CD4-positive, alpha-beta T cell (primary cell): ENCODE measurements at regions of chr12 and their contacts with region 1.

Region 1: DNA sequence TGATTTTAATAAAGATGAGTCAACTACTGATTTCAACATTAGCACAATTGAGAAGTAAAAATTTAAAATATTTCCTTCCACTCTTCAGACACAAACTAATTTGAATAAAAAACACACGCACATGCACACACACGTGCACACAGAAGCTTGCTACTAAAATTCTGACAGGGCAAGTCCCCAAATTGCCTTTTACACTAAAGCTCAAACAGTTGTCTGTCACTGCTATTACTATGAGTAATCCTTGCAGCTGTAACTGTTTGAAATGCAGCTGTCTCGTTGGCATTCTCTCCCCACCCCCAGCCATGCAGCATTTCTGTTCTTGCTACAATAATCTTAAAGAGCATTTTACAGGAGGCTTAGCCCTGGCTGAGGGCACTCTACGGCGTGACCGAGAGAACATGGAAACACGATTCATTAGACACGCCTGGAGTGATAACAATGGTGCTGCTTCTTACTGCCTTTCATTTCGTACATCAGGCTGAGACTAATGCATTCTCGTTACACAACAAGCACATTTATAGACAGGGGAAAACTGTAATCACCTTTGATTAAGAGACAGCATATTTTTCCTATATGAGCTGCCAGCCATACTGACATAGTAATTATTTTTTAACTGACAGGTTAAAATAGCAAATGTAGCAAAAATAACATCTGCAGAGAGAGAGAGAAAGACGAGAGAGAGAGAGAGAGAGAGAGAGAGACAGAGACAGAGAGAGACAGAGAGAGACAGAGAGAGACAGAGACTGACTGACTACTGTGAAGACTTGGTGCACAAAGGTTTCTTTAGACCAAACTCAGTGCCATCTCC is 153.8 kb downstream of the MED13L start:
- DNase-seq: peak in 6 of 14 experiments; percentile 6 to 65 (median 39)
- ATAC-seq: peak; percentile 66
- H3K4me3 ChIP-seq: no peak overlapping the region
- H3K4me3 Mint-ChIP-seq: peak overlapping the region; percentile 13
- H3K27ac ChIP-seq: no peak overlapping the region
- H3K27ac Mint-ChIP-seq: peak overlapping the region; percentile 22
- H3K4me1 ChIP-seq: peaks cover 19% of the 10 kb centered on the region
- H3K4me1 Mint-ChIP-seq: peaks cover 92% of the 10 kb centered on the region
- H3K27me3 ChIP-seq: no peaks in the 10 kb centered on the region
- H3K27me3 Mint-ChIP-seq: no peaks in the 10 kb centered on the region
- CTCF ChIP-seq: no peak

Region 2: GRCh38 chr12:116266168-116266601 is 142.5 kb after region 1 on chr12:
- CTCF ChIA-PET with region 1: no interaction called
- POLR2A ChIA-PET with region 1: no interaction called
- intact Hi-C with region 1: loop called in 1 of 2 experiments (anchors 5 kb)
- DNase-seq: no peak
- ATAC-seq: no peak
- H3K4me3 ChIP-seq: no peak overlapping the region
- H3K4me3 Mint-ChIP-seq: no peak overlapping the region
- H3K27ac ChIP-seq: no peak overlapping the region
- H3K27ac Mint-ChIP-seq: no peak overlapping the region
- H3K4me1 ChIP-seq: peaks cover 22% of the 10 kb centered on the region
- H3K4me1 Mint-ChIP-seq: peaks cover 16% of the 10 kb centered on the region
- H3K27me3 ChIP-seq: no peaks in the 10 kb centered on the region
- H3K27me3 Mint-ChIP-seq: no peaks in the 10 kb centered on the region
- CTCF ChIP-seq: no peak